ENCODE measurements at regions of chr11 and their contacts with region 1.

Region 1: DNA sequence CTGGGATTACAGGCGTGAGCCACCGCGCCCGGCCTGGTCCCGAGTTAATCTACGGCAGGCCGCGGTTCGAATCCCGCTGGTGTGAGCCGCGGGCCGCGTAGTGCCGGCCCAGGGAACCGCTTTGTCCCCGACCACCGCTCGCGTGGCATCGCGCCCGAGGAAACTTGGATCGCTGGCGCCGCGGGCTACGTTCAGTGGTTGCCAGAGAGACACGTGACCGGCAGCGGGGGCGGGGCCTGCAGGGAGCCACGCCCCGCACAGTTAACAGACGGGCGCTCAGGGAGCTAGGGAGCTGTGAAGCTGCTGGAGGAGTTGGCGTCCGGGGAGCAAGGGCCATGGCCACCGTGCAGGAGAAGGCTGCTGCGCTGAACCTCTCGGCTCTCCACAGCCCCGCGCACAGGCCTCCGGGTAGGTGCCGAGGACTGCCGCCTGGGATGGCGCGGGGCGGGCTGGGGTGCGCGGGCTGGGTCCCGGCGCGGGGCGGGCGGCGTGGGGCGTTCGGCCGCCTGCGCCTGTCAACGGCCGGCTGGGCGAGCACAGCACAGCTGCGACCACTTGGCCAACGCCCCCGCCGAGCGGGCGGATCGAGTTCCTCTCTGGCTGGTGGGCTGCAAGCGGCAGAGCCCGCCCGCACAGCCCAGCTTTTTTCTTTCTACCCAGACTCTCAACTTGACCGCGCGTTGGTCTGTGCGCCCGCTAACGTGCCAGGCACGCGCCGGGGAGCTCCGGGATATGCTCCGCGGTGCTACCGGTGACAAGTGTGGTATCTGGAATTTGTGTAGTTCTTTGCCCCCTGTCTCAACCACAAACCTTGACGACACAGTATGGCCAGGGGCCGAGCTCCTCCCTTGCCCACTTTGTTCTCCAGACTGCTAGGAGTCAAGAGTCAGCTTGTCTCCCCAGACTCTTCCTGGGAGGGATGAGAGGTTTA is at the start of gene DEPDC7:
- H3K4me3 ChIP-seq: peak within 1 kb of the TSS; percentile 81
- H3K27ac ChIP-seq: peak within 1 kb of the TSS; percentile 25; the same call in 1 of the 2 replicates
- H3K4me1 ChIP-seq: no peaks in the 10 kb centered on the region
- CTCF ChIP-seq: no peak

Region 2: GRCh38 chr11:32885556-32885955 is 130.3 kb before region 1 on chr11:
- CTCF ChIA-PET with region 1: no interaction called
- POLR2A ChIA-PET with region 1: no interaction called
- H3K4me3 ChIP-seq: no peak overlapping the region
- H3K27ac ChIP-seq: no peak overlapping the region
- H3K4me1 ChIP-seq: no peaks in the 10 kb centered on the region
- CTCF ChIP-seq: no peak

Region 3: DNA sequence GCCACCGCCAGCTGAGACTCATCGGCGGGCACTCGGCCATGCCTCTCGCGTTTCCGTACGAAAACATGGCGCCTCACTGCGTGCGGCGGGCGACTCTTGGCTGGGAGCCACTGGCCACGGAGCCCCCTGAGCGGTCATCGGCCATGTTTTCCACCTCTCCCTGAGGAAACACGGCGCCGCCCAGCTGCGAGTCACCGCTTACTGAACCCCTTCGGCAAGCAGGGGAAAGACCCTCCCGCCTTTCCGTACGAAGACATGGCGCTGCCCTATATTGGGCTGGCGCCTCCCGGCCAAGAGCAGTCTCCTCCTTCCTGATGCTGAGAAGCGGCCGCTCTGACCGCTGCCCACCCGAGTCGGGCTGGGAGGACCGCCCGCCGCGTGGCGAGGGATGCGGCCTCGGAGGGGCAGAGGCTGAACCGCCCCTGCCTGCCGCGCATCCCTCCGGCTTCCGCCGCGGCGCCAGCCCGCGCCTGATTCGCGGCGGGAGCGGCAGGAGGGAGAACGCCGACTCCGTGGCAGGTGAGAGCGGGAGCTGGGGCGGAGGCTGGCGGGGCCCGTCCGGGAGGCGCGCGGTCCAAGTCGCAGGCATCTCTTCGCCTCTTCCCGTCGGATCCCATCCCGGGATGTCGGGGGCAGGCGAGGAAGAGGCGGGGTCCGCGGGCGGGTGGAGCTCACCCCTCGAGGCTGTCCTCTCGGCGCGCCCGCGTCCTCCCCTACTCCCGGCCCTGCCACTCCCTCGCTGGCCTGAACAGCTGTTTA is 23.6 kb after region 1 on chr11 and contains the start of gene TCP11L1:
- CTCF ChIA-PET with region 1: interaction called, 6 read pairs
- POLR2A ChIA-PET with region 1: interaction called, 47 read pairs
- H3K4me3 ChIP-seq: peak within 1 kb of the TSS; percentile 96
- H3K27ac ChIP-seq: peak within 1 kb of the TSS; percentile 94
- H3K4me1 ChIP-seq: peaks cover 8% of the 10 kb centered on the region; the same call in 1 of the 2 replicates
- CTCF ChIP-seq: no peak; the same call in 1 of the 2 replicates

Region 4: DNA sequence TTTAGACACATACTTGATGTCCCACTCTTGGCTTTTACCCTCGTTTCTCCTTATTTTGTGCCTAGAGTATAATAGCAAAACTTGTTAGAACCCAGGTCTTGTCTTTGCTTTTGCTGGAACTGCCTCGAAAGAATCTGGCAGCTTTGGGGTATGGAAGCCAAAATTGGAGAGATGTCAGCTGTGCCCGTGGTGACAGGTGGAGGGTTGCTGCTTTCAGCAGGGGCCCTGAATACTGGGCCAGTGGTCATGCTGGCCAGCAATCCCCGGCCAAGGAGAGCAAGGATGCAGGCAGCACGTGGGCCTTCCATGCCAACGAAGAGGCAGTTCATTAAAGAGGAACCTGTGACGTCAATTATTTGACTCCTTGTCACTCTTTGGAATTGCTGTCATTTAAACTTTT is 422.4 kb after region 1 on chr11:
- CTCF ChIA-PET with region 1: no interaction called
- POLR2A ChIA-PET with region 1: no interaction called
- H3K4me3 ChIP-seq: no peak overlapping the region
- H3K27ac ChIP-seq: no peak overlapping the region
- H3K4me1 ChIP-seq: no peaks in the 10 kb centered on the region
- CTCF ChIP-seq: no peak